Ovary (tissue), 10 donors: ENCODE measurements at regions of chr3 and their contacts with region 1.

Region 1: DNA sequence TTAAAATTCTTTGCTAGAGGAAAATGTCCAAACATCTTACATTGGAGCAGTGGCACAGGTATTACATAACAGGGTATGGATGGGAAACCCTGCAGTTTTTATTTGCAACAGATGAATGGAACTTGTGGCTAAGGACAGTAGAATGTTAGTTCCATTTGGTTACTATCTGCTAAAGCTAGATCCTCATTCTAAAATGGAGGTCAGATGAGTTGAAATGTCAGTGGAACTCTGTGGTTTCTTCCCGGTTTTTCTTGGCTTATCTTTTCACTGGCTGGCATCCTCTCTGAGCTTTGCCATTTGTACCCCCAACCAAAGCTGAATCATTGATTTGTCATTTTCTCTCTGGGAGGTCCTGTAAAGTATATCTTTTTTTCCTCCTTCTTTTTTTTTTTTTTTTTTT is 68.9 kb downstream of the ARMC8 start:
- DNase-seq: no peak
- H3K4me3 ChIP-seq: no peak overlapping the region
- H3K27ac ChIP-seq: no peak overlapping the region
- H3K4me1 ChIP-seq: no peaks in the 10 kb centered on the region
- H3K27me3 ChIP-seq: no peaks in the 10 kb centered on the region
- CTCF ChIP-seq: no peak
- EP300 ChIP-seq: no peak
- POLR2A ChIP-seq: no peak

Region 2: DNA sequence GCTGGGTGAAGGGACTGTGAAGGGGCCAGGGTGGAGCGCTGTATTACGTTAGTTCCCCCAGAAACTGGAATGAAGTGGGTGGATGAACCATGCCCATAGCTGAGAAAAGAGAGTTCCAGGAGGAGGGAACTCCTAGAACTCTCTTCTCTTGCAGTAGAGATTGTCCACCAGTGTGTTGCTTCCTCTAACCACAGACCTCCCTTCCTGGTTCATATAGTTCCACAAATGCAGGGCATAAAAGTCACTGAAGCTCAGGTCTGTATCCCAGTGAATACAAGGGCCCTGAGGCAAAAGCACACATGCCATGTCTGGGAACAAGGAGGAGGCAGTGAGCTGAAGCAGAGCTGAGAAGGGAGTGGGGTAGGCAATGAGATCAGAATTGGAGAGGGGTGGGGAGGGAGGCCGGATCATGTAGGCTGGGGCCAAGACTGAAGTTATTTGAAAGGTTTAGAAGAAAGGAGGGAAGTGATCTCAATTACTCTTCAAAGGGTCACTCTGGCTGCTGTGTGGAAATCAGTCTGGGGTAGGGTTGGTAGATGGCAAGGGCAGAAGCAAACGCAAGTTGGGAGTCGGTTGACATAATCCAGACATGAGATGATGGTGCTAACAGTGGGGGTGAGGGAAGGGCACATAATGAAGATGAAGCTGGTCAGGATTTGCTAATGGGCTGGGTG is 130.3 kb before region 1 on chr3:
- intact Hi-C with region 1: loop called in 1 of 4 experiments (anchors 10 kb)
- DNase-seq: no peak
- H3K4me3 ChIP-seq: no peak overlapping the region
- H3K27ac ChIP-seq: no peak overlapping the region
- H3K4me1 ChIP-seq: peaks cover 3% of the 10 kb centered on the region
- H3K27me3 ChIP-seq: no peaks in the 10 kb centered on the region
- CTCF ChIP-seq: no peak
- EP300 ChIP-seq: no peak
- POLR2A ChIP-seq: no peak

Region 3: GRCh38 chr3:138234401-138235179 is 21.4 kb before region 1 on chr3:
- intact Hi-C with region 1: no loop called
- DNase-seq: no peak
- H3K4me3 ChIP-seq: no peak overlapping the region
- H3K27ac ChIP-seq: no peak overlapping the region
- H3K4me1 ChIP-seq: no peaks in the 10 kb centered on the region
- H3K27me3 ChIP-seq: no peaks in the 10 kb centered on the region
- CTCF ChIP-seq: no peak
- EP300 ChIP-seq: no peak
- POLR2A ChIP-seq: no peak

Region 4: GRCh38 chr3:138284957-138285477 is 29.0 kb after region 1 on chr3:
- intact Hi-C with region 1: no loop called
- DNase-seq: no peak
- H3K4me3 ChIP-seq: no peak overlapping the region
- H3K27ac ChIP-seq: no peak overlapping the region
- H3K4me1 ChIP-seq: no peaks in the 10 kb centered on the region
- H3K27me3 ChIP-seq: no peaks in the 10 kb centered on the region
- CTCF ChIP-seq: no peak
- EP300 ChIP-seq: no peak
- POLR2A ChIP-seq: no peak

Region 5: DNA sequence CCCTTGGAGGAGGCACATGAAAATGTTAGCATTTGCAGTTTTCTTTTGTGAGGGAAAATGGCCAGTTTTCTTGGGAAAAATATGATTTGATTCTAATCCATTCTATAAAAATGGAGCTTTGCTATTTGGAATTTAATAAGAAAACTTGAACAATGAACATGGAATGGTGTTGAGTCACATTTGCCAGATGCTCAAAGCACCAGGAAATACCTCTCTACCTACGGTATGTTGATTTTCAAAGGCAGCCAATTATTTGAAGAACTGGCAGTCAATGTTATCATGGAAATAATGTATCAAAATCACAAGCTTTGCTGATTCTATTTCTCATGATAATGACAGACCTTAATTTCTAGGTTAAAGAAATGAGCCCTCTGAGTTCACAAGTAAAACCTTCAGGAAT is 58.7 kb after region 1 on chr3:
- intact Hi-C with region 1: no loop called
- DNase-seq: no peak
- H3K4me3 ChIP-seq: no peak overlapping the region
- H3K27ac ChIP-seq: no peak overlapping the region
- H3K4me1 ChIP-seq: no peaks in the 10 kb centered on the region
- H3K27me3 ChIP-seq: no peaks in the 10 kb centered on the region
- CTCF ChIP-seq: no peak
- EP300 ChIP-seq: no peak
- POLR2A ChIP-seq: no peak

Region 6: GRCh38 chr3:138329127-138329983 is 73.3 kb after region 1 on chr3 and contains the start of gene NME9:
- intact Hi-C with region 1: no loop called
- DNase-seq: peak; percentile 85 to 92 (median 89)
- H3K4me3 ChIP-seq: peak within 1 kb of the TSS; percentile 46
- H3K27ac ChIP-seq: peak within 1 kb of the TSS in 1 of 2 donors; percentile 4
- H3K4me1 ChIP-seq: no peaks in the 10 kb centered on the region
- H3K27me3 ChIP-seq: no peaks in the 10 kb centered on the region
- CTCF ChIP-seq: peak; percentile 8 to 43 (median 41)
- EP300 ChIP-seq: peak; percentile 59
- POLR2A ChIP-seq: no peak
- total RNA-seq, gene NME9: 0.43 to 9.8 (median 0.82) TPM